Activated CD8-positive, alpha-beta T cell treated with anti-CD3 and anti-CD28 coated beads, Interleukin-2, amount 10 ng/mL, durations not matched to agents 7 days and 5 days (primary cell): ENCODE measurements at regions of chr6 and their contacts with region 1.

Region 1: DNA sequence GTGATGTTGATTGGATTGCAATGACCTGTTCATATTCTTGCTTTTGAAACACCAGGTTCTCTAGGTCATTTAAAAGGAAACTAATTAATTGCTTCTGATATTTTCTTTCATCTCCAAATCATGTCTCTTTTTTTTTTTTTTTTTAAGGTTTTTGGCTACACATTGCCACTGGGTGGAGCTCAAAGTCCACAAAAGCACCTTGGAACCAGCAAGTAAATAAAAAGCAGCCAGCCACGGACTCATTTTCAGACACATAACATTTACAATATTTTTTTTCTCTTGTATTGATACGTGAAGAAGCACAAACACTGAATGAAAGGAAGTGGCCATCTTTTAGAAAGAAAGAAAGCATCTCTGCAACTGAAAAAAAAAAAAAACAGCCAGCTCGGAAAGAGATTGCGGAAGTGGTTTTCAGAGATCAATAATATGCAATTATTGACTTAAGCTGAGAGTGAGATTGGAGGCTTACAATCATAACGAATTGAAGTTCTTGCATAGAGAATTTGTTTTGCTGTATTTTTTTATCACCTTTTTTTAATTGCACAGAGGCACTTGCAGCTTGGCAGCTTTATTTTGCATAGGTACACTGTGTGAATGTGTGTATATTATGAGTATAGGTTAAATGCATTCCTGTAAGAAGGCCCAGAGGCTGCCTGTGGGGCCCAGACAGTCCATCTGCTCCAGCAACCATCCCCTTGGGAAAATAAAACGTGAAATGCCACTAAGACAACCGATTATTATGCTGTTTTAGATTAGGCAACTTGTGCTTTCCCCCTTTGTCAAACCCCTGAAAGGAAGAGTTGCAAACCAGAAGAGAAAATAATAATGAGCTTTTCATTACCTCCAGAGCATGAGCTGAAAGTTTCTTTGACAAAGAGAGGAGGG is 28.2 kb downstream of the CGA start:
- DNase-seq: peak; percentile 65
- ATAC-seq: no peak
- H3K4me3 Mint-ChIP-seq: no peak overlapping the region
- H3K27ac Mint-ChIP-seq: no peak overlapping the region
- H3K4me1 Mint-ChIP-seq: no peaks in the 10 kb centered on the region
- H3K27me3 Mint-ChIP-seq: peaks cover 30% of the 10 kb centered on the region

Region 2: GRCh38 chr6:87078983-87079616 is 12.4 kb after region 1 on chr6:
- CTCF ChIA-PET with region 1: interaction called, 33 read pairs
- POLR2A ChIA-PET with region 1: no interaction called
- DNase-seq: peak; percentile 63
- ATAC-seq: peak; percentile 74
- H3K4me3 Mint-ChIP-seq: no peak overlapping the region
- H3K27ac Mint-ChIP-seq: no peak overlapping the region
- H3K4me1 Mint-ChIP-seq: no peaks in the 10 kb centered on the region
- H3K27me3 Mint-ChIP-seq: peaks cover 15% of the 10 kb centered on the region

Region 3: GRCh38 chr6:87102151-87102621 is 35.5 kb after region 1 on chr6:
- CTCF ChIA-PET with region 1: no interaction called
- POLR2A ChIA-PET with region 1: no interaction called
- DNase-seq: no peak
- ATAC-seq: no peak
- H3K4me3 Mint-ChIP-seq: no peak overlapping the region
- H3K27ac Mint-ChIP-seq: no peak overlapping the region
- H3K4me1 Mint-ChIP-seq: no peaks in the 10 kb centered on the region
- H3K27me3 Mint-ChIP-seq: peaks cover 22% of the 10 kb centered on the region

Region 4: GRCh38 chr6:88013015-88013414 is 946.3 kb after region 1 on chr6:
- CTCF ChIA-PET with region 1: no interaction called
- POLR2A ChIA-PET with region 1: no interaction called
- DNase-seq: peak; percentile 30
- ATAC-seq: peak; percentile 91
- H3K4me3 Mint-ChIP-seq: no peak overlapping the region
- H3K27ac Mint-ChIP-seq: peak overlapping the region; percentile 72
- H3K4me1 Mint-ChIP-seq: peaks cover 11% of the 10 kb centered on the region
- H3K27me3 Mint-ChIP-seq: no peaks in the 10 kb centered on the region